Tibial artery (tissue), 4 donors: ENCODE measurements at regions of chrX and their contacts with region 1.

Region 1: GRCh38 chrX:2498781-2499302 is 1.9 kb downstream of the DHRSX start:
- DNase-seq: peak; percentile 42 to 69
- H3K4me3 ChIP-seq: peak overlapping the region; percentile 91 to 97
- H3K27ac ChIP-seq: peak overlapping the region; percentile 95 to 96
- H3K4me1 ChIP-seq: peaks cover 0 to 33% (median 24%) of the 10 kb centered on the region in 4 donors
- H3K27me3 ChIP-seq: no peaks in the 10 kb centered on the region
- CTCF ChIP-seq: no peak

Region 2: GRCh38 chrX:2334237-2334636 is 164.6 kb before region 1 on chrX:
- intact Hi-C with region 1: loop called (anchors 10 kb)
- DNase-seq: no peak
- H3K4me3 ChIP-seq: no peak overlapping the region
- H3K27ac ChIP-seq: no peak overlapping the region
- H3K4me1 ChIP-seq: no peaks in the 10 kb centered on the region
- H3K27me3 ChIP-seq: no peaks in the 10 kb centered on the region
- CTCF ChIP-seq: no peak

Region 3: DNA sequence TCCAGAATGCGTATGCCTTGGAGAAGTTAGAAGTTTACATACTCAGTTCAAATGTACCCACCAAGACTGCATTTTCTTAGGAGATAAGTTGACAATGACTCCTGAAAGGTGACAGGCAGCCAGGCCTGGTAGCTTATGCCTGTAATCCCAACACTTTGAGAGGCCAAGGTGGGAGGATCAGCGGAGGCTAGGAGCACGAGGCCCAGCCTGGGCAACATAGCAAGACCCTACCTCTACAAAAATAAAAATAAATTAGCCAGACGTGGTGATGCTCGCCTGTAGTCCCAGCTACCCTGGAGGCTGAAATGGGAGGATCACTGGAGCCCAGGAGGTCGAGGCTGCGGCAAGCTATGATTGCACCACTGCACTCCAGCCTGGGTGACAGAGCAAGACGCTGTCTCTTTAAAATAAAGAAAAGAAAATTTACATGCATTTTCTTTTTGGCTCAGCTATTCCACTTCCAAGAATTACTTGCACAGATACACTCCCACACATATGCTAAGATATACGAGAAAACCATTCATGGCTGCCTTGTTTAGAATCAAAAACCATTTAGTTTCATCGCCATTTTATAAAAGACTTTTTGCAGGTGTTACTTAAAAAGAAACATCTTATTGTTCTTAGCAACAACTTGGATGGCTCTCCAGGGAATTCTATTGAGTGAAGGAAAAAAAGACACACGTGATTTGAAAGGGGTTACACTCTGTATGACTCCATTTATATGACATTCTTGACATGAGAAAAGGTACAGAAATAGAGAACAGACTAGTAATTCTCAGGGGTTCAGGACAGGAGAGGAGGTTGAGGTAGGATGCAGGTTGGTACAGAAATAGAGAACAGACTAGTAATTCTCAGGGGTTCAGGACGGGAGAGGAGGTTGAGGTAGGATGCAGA is 64.3 kb before region 1 on chrX:
- intact Hi-C with region 1: no loop called
- DNase-seq: no peak
- H3K4me3 ChIP-seq: no peak overlapping the region
- H3K27ac ChIP-seq: no peak overlapping the region
- H3K4me1 ChIP-seq: no peaks in the 10 kb centered on the region
- H3K27me3 ChIP-seq: no peaks in the 10 kb centered on the region
- CTCF ChIP-seq: no peak